Activated CD4-positive, alpha-beta T cell treated with anti-CD3 and anti-CD28 coated beads, Interleukin-2, amount 10 ng/mL, durations not matched to agents 24 days and 14 days (primary cell): ENCODE measurements at regions of chr9 and their contacts with region 1.

Region 1: GRCh38 chr9:133406480-133407307 is 11.1 kb downstream of the REXO4 start:
- DNase-seq: peak; percentile 92
- H3K4me3 Mint-ChIP-seq: no peak overlapping the region
- H3K27ac Mint-ChIP-seq: peak overlapping the region; percentile 68
- H3K4me1 Mint-ChIP-seq: peaks cover 12% of the 10 kb centered on the region
- H3K27me3 Mint-ChIP-seq: no peaks in the 10 kb centered on the region

Region 2: GRCh38 chr9:133335878-133336811 is 70.5 kb before region 1 on chr9 and contains the start of gene SURF6:
- intact Hi-C with region 1: no loop called
- DNase-seq: peak; percentile 99
- H3K4me3 Mint-ChIP-seq: peak within 1 kb of the TSS; percentile 89
- H3K27ac Mint-ChIP-seq: peak within 1 kb of the TSS; percentile 90
- H3K4me1 Mint-ChIP-seq: peaks cover 18% of the 10 kb centered on the region
- H3K27me3 Mint-ChIP-seq: no peaks in the 10 kb centered on the region
- total RNA-seq, gene SURF6: 27.4 and 28.8 TPM in 2 replicates

Region 3: DNA sequence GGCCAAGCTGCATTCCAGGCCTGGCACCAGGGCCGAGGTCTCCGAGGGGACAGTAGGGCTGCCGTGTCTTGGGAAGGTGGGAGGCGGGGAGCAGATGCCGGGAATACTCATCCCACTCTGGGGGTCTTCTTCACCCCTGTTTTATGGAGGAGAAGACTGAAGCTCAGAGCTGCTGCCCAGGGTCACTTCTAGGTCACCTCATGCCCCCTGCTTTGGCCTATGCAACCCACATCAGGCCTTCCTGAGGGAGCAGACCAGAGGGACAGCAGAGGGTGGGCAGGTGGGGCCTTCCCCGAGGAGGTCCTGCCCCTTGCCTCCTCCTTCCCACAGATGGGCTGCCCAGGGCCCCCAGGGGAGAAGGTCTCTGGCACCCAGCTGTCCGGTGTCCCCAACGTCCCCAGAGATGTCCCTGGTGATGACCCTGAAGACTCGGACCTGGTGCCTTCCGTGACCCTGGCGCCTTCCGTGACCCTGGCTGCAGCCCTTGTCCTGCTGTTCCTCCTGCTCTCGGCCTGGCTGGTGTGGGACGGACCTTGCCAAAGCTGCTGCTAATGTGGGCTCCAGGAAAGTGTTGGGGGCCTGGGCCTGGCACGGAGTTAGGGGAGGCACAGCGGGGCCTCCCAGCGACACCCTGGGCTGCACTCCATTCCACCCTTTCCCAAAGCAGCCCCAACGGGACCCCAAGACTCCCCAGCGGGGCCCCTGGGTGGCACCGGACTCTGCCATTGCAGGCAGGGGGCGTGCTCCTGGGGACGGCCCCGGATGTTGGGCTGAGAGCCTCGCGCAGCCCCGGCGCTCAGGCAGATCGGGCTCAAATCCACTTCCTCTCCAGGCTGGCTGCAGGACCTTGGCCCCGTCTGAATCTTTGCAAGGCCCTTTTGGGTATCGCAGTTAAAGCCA is 78.9 kb after region 1 on chr9:
- intact Hi-C with region 1: loop called (anchors 1 kb)
- DNase-seq: no peak
- H3K4me3 Mint-ChIP-seq: peak overlapping the region; percentile 23
- H3K27ac Mint-ChIP-seq: no peak overlapping the region
- H3K4me1 Mint-ChIP-seq: no peaks in the 10 kb centered on the region
- H3K27me3 Mint-ChIP-seq: peaks cover 13% of the 10 kb centered on the region